Prostate gland (tissue), 2 donors: ENCODE measurements at regions of chr17 and their contacts with region 1.

Region 1: DNA sequence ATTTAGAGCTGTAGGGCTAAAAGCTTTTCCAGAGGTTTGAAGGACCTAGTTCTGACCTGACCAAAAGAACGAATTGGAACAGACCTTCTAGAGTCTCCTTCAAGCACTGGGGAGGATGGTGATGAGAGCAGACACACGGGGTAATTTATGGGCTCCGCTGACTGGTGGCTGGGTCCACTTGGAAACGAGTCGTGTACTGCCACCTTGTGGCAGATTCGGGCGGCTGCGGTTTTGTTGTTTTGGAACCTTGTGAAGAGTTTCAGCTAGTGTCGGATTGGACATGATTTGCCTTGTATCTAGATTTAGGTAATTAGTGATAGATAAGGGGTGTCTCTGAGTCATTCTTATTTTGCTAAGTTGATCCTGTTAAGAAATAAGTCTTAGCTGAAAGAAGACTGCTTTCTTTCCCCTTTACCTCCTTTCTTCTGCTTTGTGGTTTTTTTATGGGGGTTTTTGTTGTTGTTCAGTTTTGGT is 98.9 kb downstream of the AATF start:
- DNase-seq: peak; percentile 77
- H3K4me3 ChIP-seq: no peak overlapping the region
- H3K27ac ChIP-seq: no peak overlapping the region
- H3K4me1 ChIP-seq: no peaks in the 10 kb centered on the region
- H3K27me3 ChIP-seq: no peaks in the 10 kb centered on the region
- CTCF ChIP-seq: peak; percentile 78 to 90 (median 82)
- POLR2A ChIP-seq: no peak

Region 2: DNA sequence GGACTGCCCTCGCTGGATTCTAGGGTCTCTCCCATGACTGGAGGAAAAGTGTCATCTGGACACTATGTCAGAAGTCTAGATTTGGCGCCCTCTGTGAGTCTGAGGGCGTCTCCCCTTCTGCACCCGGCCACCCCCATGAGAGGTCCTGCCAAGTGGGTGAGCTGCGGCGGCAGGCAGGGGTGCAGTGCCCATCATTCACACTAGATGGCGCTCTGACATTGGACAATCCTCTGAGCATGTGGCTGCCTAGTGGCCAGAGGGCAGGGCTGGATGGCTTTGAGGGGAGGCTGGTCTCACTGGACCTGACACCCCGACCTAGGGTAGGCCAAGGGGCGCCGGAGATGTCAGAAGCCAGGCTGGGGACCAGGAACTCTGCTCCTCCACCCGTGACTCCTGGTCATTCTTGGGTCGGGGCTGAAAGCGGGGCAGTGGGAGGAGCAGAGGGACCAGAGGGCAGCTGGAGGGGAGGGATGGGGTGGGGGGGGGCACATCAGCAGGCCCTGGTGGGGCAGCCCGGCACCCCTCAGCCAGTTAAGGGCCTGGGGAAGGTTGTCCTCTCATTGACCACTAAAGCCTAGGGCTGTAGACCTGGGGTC is 418.3 kb before region 1 on chr17:
- intact Hi-C with region 1: loop called (anchors 1 kb)
- DNase-seq: peak; percentile 62
- H3K4me3 ChIP-seq: no peak overlapping the region
- H3K27ac ChIP-seq: no peak overlapping the region
- H3K4me1 ChIP-seq: no peaks in the 10 kb centered on the region
- H3K27me3 ChIP-seq: no peaks in the 10 kb centered on the region
- CTCF ChIP-seq: peak; percentile 93 to 96 (median 94)
- POLR2A ChIP-seq: no peak

Region 3: GRCh38 chr17:36901506-36901905 is 146.2 kb before region 1 on chr17:
- intact Hi-C with region 1: no loop called
- DNase-seq: no peak
- H3K4me3 ChIP-seq: no peak overlapping the region
- H3K27ac ChIP-seq: no peak overlapping the region
- H3K4me1 ChIP-seq: no peaks in the 10 kb centered on the region
- H3K27me3 ChIP-seq: no peaks in the 10 kb centered on the region
- CTCF ChIP-seq: no peak
- POLR2A ChIP-seq: no peak

Region 4: GRCh38 chr17:37212179-37212578 is 164.5 kb after region 1 on chr17:
- intact Hi-C with region 1: loop called (anchors 10 kb)
- DNase-seq: no peak
- H3K4me3 ChIP-seq: no peak overlapping the region
- H3K27ac ChIP-seq: no peak overlapping the region
- H3K4me1 ChIP-seq: no peaks in the 10 kb centered on the region
- H3K27me3 ChIP-seq: no peaks in the 10 kb centered on the region
- CTCF ChIP-seq: no peak
- POLR2A ChIP-seq: no peak